Colonic mucosa (tissue), 4 donors: ENCODE measurements at regions of chr10 and their contacts with region 1.

Region 1: GRCh38 chr10:128859738-128860386 is 607.2 kb upstream of the MGMT start:
- DNase-seq: peak; percentile 70
- H3K4me3 ChIP-seq: no peak overlapping the region
- H3K27ac ChIP-seq: no peak overlapping the region
- H3K4me1 ChIP-seq: no peaks in the 10 kb centered on the region
- H3K27me3 ChIP-seq: no peaks in the 10 kb centered on the region
- CTCF ChIP-seq: peak; percentile 62

Region 2: GRCh38 chr10:128557149-128557710 is 302.6 kb before region 1 on chr10:
- intact Hi-C with region 1: loop called (anchors 10 kb)
- DNase-seq: no peak
- H3K4me3 ChIP-seq: no peak overlapping the region
- H3K27ac ChIP-seq: no peak overlapping the region
- H3K4me1 ChIP-seq: no peaks in the 10 kb centered on the region
- H3K27me3 ChIP-seq: no peaks in the 10 kb centered on the region
- CTCF ChIP-seq: no peak

Region 3: GRCh38 chr10:128631801-128632241 is 228.0 kb before region 1 on chr10:
- intact Hi-C with region 1: loop called (anchors 5 kb)
- DNase-seq: no peak
- H3K4me3 ChIP-seq: no peak overlapping the region
- H3K27ac ChIP-seq: no peak overlapping the region
- H3K4me1 ChIP-seq: no peaks in the 10 kb centered on the region
- H3K27me3 ChIP-seq: no peaks in the 10 kb centered on the region
- CTCF ChIP-seq: peak; percentile 35